T-cell (primary cell): ENCODE measurements at regions of chr22 and their contacts with region 1.

Region 1: DNA sequence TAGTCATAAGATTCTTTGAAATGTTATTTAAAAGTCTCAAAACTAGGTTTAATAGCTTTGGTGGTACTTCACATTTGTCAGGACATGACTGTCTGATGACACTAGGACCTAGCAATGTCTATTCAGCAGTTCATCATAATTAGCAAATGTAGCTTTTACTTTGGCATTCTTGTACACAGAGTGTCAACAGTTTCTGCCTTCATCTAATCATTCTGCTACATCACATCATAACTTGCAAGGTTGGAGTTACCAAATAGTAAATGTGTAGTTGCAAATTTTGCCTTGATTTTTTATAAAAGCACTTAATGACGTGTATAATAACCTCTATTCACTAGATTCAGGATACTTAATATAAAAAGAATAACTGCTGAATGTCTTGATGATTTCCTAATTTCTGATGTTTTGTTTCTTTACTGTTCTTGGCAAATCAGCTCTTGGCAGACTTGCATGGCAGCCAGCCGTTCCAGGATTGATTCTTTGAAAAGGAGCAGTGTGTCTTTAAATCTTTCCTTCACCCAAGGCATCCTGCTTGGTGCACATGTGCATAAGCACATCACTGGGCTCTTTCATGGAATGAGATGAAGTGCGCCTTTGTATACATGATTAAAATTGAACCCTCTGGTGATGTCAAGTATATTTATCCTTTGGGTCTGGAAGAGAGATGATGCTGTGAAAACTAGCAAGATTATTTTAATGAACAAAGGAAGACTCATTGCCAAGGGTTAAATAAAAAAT is 12.2 kb downstream of the FBXO7 start:
- DNase-seq: no peak
- ATAC-seq: no peak
- H3K4me3 ChIP-seq: no peak overlapping the region
- H3K4me3 Mint-ChIP-seq: no peak overlapping the region
- H3K27ac ChIP-seq: no peak overlapping the region
- H3K27ac Mint-ChIP-seq: no peak overlapping the region
- H3K4me1 ChIP-seq: no peaks in the 10 kb centered on the region
- H3K4me1 Mint-ChIP-seq: peaks cover 4 to 12% (median 9%) of the 10 kb centered on the region in 3 donors
- H3K27me3 ChIP-seq: no peaks in the 10 kb centered on the region
- H3K27me3 Mint-ChIP-seq: no peaks in the 10 kb centered on the region

Region 2: GRCh38 chr22:30606455-30607299 is 1880.1 kb before region 1 on chr22 and contains the start of gene TCN2:
- CTCF ChIA-PET with region 1: interaction called in 1 of 2 experiments, 10 read pairs
- POLR2A ChIA-PET with region 1: no interaction called
- DNase-seq: peak in 24 of 35 experiments; percentile 3 to 37 (median 14)
- ATAC-seq: peak; percentile 63 to 76 (median 71)
- H3K4me3 ChIP-seq: peak within 1 kb of the TSS; percentile 26 to 56
- H3K4me3 Mint-ChIP-seq: peak within 1 kb of the TSS; percentile 79 to 92 (median 80)
- H3K27ac ChIP-seq: no peak within 1 kb of the TSS
- H3K27ac Mint-ChIP-seq: peak within 1 kb of the TSS in 1 of 2 donors; percentile 81
- H3K4me1 ChIP-seq: peaks cover 4 to 21% of the 10 kb centered on the region in 2 experiments
- H3K4me1 Mint-ChIP-seq: peaks cover 20 to 29% (median 27%) of the 10 kb centered on the region in 3 donors
- H3K27me3 ChIP-seq: peaks cover 0 to 25% of the 10 kb centered on the region in 2 experiments
- H3K27me3 Mint-ChIP-seq: peaks cover 0 to 10% of the 10 kb centered on the region in 2 donors
- total RNA-seq, gene TCN2: 0.26 to 0.65 (median 0.57) TPM

Region 3: GRCh38 chr22:32474635-32475467 is 12.0 kb before region 1 on chr22 and contains the start of gene FBXO7:
- CTCF ChIA-PET with region 1: interaction called in 1 of 2 experiments, 12 read pairs
- POLR2A ChIA-PET with region 1: interaction called in 1 of 2 experiments, 4 read pairs
- DNase-seq: peak; percentile 69 to 92 (median 82)
- ATAC-seq: peak; percentile 82 to 90 (median 86)
- H3K4me3 ChIP-seq: peak within 1 kb of the TSS; percentile 87 to 94
- H3K4me3 Mint-ChIP-seq: peak within 1 kb of the TSS; percentile 88 to 95 (median 95)
- H3K27ac ChIP-seq: peak within 1 kb of the TSS; percentile 86
- H3K27ac Mint-ChIP-seq: peak within 1 kb of the TSS; percentile 93 to 95
- H3K4me1 ChIP-seq: peaks cover 15 to 25% of the 10 kb centered on the region in 2 experiments
- H3K4me1 Mint-ChIP-seq: peaks cover 14 to 26% (median 25%) of the 10 kb centered on the region in 3 donors
- H3K27me3 ChIP-seq: no peaks in the 10 kb centered on the region
- H3K27me3 Mint-ChIP-seq: no peaks in the 10 kb centered on the region
- total RNA-seq, gene FBXO7: 77.8 to 127 (median 83.4) TPM

Region 4: GRCh38 chr22:32850591-32851517 is 364.0 kb after region 1 on chr22:
- CTCF ChIA-PET with region 1: no interaction called
- POLR2A ChIA-PET with region 1: no interaction called
- DNase-seq: no peak
- ATAC-seq: no peak
- H3K4me3 ChIP-seq: no peak overlapping the region
- H3K4me3 Mint-ChIP-seq: no peak overlapping the region
- H3K27ac ChIP-seq: no peak overlapping the region
- H3K27ac Mint-ChIP-seq: no peak overlapping the region
- H3K4me1 ChIP-seq: no peaks in the 10 kb centered on the region
- H3K4me1 Mint-ChIP-seq: no peaks in the 10 kb centered on the region
- H3K27me3 ChIP-seq: peaks cover 0 to 20% of the 10 kb centered on the region in 2 experiments
- H3K27me3 Mint-ChIP-seq: peaks cover 8 to 20% of the 10 kb centered on the region in 2 donors